ENCODE measurements at regions of chr6 and their contacts with region 1.

Region 1: DNA sequence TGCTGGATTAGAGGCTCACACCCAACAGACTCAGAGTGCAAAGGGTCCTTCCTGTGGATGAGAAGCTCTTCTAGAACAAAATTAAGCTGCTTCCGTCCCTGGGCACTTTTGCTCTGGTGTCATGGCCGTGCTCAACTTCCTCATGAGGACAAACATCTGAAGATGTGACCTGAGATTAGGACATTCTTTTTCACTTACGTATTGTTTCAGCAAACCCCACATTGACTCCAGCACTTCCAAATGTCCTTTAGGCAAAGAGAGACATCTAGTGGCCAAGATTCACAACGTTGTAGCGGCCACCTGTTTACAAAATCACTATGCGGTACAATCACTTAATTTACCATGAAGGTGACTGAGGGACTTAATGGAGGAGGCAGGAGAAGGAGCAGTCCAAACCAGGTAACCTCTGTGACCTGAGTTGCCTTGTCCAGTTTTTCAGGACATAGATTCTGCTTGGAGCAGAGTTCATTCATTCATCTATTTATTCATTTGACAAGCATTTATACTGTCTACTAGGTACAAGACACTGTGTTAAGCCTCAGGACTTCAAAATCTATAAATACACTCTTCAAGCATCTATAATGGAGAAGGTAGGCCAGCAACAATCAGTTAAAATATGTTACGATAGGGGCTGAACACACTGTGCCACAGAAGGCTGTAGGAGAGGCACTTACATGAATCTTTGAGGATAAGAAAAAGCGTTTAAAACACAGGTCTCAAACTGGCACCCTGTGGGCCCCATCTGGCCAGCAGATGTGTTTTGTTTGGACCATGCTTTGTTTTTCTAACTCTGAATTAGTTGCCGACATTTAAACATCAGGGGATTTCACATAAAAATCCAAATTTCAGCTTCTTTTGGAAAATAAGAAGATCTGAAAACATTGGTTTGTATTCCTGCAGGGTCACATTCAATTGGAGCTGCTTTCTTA is 5.6 kb upstream of the ADGRF1 start:
- DNase-seq: peak; percentile 97
- ATAC-seq: peak; percentile 57
- H3K4me3 ChIP-seq: no peak overlapping the region
- H3K27ac ChIP-seq: peak overlapping the region; percentile 95
- H3K4me1 ChIP-seq: peaks cover 54% of the 10 kb centered on the region
- H3K27me3 ChIP-seq: no peaks in the 10 kb centered on the region
- CTCF ChIP-seq: peak; percentile 94

Region 2: GRCh38 chr6:46704562-46704961 is 343.2 kb before region 1 on chr6:
- CTCF ChIA-PET with region 1: no interaction called
- POLR2A ChIA-PET with region 1: interaction called, 3 read pairs
- intact Hi-C with region 1: loop called (anchors 2 kb)
- DNase-seq: peak; percentile 80
- ATAC-seq: peak; percentile 90
- H3K4me3 ChIP-seq: no peak overlapping the region
- H3K27ac ChIP-seq: no peak overlapping the region
- H3K4me1 ChIP-seq: peaks cover 10% of the 10 kb centered on the region
- H3K27me3 ChIP-seq: no peaks in the 10 kb centered on the region
- CTCF ChIP-seq: peak; percentile 76

Region 3: DNA sequence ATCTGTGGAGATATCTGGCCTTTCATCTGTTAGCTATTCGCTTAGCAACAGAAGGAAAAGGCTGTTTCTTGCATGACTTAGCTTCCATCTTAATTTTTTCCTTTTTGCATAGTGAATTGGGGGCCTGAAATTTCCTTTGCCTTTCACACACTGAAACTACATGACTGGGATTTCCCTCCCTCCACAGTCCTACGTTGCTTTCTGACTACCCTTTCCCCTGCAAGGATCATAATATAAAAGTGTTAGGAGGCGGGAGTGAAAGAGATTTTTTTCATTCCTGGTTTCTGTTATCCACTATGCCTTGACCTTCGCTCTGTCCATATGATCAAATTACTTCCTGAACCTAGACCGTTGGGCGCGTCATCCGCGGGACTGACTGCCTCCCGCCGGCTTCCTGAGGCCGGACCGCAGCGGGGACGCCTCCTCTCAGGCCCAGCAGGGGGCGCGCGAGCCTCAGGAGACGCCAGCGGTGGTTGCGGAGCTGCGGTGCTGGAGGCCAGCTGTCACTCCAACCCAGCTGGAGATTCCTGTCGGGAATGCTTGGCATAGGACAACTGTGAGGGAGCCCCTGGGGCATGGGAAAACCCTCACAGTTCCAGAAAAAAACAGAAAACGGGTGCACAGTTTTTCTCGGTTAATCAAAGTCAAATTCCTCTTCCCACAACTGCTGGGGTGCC is 198.9 kb before region 1 on chr6:
- CTCF ChIA-PET with region 1: interaction called, 3 read pairs
- POLR2A ChIA-PET with region 1: no interaction called
- intact Hi-C with region 1: loop called (anchors 1 kb)
- DNase-seq: peak; percentile 94
- ATAC-seq: peak; percentile 93
- H3K4me3 ChIP-seq: peak overlapping the region; percentile 46; the same call in 1 of the 2 replicates
- H3K27ac ChIP-seq: peak overlapping the region; percentile 70
- H3K4me1 ChIP-seq: peaks cover 32% of the 10 kb centered on the region
- H3K27me3 ChIP-seq: no peaks in the 10 kb centered on the region
- CTCF ChIP-seq: peak; percentile 97

Region 4: DNA sequence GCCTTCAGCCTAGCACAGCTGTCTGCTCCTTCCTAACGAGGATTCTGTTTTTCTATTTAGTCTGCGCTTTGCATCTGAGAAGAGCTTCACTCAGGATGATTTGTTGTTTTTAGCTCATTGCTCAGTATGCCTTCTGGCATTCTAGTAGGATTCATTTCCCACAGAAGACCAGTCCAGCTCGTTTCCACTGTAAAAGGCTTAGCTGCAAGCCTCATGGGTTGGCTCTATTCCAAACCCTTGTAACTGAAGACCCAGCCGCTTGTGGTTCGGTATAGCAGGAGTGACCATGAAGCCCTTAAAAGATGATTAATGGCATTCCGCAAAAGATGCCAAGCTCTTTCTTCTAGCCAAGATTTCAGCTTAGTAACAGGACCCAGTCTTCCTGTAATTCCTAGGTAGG is 12.8 kb before region 1 on chr6:
- CTCF ChIA-PET with region 1: interaction called, 7 read pairs
- POLR2A ChIA-PET with region 1: interaction called, 7 read pairs
- intact Hi-C with region 1: loop called (anchors 1 kb)
- DNase-seq: peak; percentile 99
- ATAC-seq: peak; percentile 89
- H3K4me3 ChIP-seq: peak overlapping the region; percentile 52
- H3K27ac ChIP-seq: peak overlapping the region; percentile 90
- H3K4me1 ChIP-seq: peaks cover 59% of the 10 kb centered on the region
- H3K27me3 ChIP-seq: no peaks in the 10 kb centered on the region
- CTCF ChIP-seq: no peak